ENCODE measurements at regions of chr1 and their contacts with region 1.

Region 1: DNA sequence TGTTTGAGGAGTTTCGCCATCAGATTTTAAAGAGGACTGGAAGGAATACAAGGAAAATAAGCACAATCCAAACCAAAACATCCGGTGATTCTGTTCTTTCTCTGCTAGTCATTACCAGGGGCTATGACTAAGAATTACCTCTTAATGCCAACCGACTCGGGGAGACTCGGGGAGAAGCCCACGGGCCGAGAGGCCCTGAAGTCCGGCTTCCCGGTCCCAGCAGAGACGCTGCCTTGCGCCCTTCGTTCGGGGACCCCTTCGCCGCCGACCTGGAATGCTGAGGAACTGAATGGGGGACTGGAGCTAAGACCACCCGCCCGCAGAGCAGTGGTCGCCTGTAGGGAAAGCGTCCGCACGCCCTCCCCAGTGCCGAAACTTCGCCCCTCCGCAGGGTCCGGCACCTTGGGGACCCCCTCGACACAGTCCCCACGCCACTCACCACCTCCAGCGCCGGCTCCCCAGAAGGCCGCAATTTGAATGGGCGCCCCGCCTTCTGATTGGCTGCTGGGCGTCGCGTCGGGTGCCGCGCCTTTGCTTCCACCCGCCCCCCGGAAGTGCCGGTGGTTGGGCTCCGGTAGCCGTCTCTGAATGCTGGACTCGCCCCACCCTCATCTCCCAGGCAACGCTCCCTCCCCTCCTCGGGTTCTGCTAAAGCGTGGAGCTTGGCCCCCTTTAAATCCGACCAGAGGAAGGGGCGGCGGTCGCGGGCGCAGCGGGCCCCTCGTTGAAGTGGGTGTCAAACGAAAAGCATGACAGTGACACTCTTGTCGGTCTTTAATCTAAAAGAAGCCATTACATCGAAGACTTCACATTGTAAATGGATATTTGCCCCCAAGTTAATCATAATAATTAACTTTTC is at the start of gene KIF14:
- DNase-seq: peak; percentile 96
- H3K4me3 Mint-ChIP-seq: peak within 1 kb of the TSS; percentile 90
- H3K27ac Mint-ChIP-seq: peak within 1 kb of the TSS; percentile 86
- H3K4me1 Mint-ChIP-seq: peaks cover 66% of the 10 kb centered on the region
- H3K27me3 Mint-ChIP-seq: no peaks in the 10 kb centered on the region
- total RNA-seq, gene KIF14: 28.3 to 30.3 TPM

Region 2: GRCh38 chr1:200634261-200635122 is 14.0 kb after region 1 on chr1:
- CTCF ChIA-PET with region 1: interaction called, 26 read pairs
- POLR2A ChIA-PET with region 1: no interaction called
- DNase-seq: no peak
- H3K4me3 Mint-ChIP-seq: no peak overlapping the region
- H3K27ac Mint-ChIP-seq: no peak overlapping the region
- H3K4me1 Mint-ChIP-seq: peaks cover 4% of the 10 kb centered on the region
- H3K27me3 Mint-ChIP-seq: peaks cover 3% of the 10 kb centered on the region

Region 3: DNA sequence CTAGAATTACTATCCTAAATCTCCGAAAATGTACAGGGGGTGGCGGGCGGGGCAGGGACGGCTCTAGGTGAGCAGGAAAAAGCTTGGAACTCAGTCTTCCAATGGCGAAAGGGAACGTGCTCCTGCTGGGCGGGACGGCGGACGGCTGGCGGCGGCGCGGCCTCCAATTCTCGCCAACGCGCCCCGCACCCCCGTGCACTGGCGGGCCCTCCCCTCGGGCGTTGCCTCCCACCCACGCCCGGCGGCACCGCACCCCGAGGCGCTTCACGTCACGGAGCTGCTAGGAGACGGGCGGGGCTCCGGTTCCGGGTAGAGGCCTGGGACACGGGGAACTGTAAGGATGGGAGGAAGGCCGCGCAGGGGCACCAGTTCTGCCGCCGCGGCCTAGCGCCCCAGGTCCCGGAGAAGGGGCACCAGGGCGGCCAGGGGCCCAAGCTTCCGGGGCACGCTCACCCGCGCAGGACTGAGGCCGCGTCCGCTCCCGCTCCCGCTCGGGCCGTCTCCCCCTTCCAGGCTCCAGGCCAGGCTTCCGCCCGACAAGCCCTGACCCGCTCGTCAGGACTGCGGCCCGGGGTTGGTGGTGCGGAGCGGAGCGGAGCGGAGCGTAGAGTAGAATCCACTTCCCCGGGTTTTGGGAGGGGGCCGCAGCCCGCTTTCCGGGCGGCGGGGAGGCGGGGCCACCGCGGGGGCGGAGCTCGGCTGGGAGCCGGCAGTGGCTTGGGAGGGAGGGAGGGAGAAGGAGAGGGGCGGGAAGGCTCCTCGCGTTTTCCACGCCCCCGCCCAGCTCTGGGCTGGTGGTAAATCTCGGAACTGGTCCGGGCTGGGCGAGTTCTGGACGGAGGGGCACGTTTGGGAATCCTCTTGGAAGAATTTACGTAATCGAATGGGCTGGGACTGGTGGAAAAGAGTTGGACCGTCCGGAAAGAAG is 49.1 kb after region 1 on chr1 and contains the start of gene DDX59:
- CTCF ChIA-PET with region 1: interaction called, 62 read pairs
- POLR2A ChIA-PET with region 1: interaction called, 62 read pairs
- DNase-seq: peak; percentile 91
- H3K4me3 Mint-ChIP-seq: peak within 1 kb of the TSS; percentile 99
- H3K27ac Mint-ChIP-seq: peak within 1 kb of the TSS; percentile 93
- H3K4me1 Mint-ChIP-seq: peaks cover 35% of the 10 kb centered on the region
- H3K27me3 Mint-ChIP-seq: no peaks in the 10 kb centered on the region
- total RNA-seq, gene DDX59: 32.1 to 34.0 TPM

Region 4: GRCh38 chr1:200738327-200738739 is 117.8 kb after region 1 on chr1:
- CTCF ChIA-PET with region 1: interaction called, 12 read pairs
- POLR2A ChIA-PET with region 1: interaction called, 4 read pairs
- DNase-seq: no peak
- H3K4me3 Mint-ChIP-seq: peak overlapping the region; percentile 90
- H3K27ac Mint-ChIP-seq: peak overlapping the region; percentile 28
- H3K4me1 Mint-ChIP-seq: peaks cover 21% of the 10 kb centered on the region
- H3K27me3 Mint-ChIP-seq: peaks cover 36% of the 10 kb centered on the region

Region 5: GRCh38 chr1:200794506-200795065 is 174.1 kb after region 1 on chr1:
- CTCF ChIA-PET with region 1: interaction called, 109 read pairs
- POLR2A ChIA-PET with region 1: no interaction called
- DNase-seq: no peak
- H3K4me3 Mint-ChIP-seq: no peak overlapping the region
- H3K27ac Mint-ChIP-seq: no peak overlapping the region
- H3K4me1 Mint-ChIP-seq: no peaks in the 10 kb centered on the region
- H3K27me3 Mint-ChIP-seq: peaks cover 5% of the 10 kb centered on the region

Region 6: DNA sequence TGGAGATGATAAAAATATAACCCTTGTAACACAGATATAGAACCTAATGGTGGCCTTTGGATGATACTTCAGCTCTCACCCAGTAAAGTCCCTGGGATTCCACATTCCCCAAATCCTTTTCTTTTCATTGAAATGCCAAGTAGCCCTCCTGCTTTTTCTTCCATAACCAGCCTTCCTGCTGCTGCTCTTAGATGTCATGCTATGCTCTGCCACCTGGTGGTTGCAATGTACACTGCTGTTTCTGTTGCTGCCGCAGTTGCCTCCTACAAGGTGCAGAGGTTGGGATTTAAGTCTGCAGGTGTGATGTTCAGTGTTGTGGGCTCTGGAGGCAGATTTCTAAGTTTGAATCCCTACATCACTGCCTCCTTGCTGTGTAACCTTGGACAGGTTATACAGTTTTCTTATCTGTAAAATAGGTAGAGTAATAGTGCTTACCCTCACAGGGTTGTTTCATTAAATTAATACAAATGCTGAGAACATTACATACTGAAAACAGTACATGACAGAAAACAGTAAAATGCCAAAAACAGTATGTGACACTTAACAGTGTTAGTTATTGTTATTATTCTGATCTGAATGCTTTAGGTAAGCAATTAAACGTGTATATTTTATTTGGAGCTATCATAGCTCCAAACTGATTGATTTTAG is 182.5 kb after region 1 on chr1:
- CTCF ChIA-PET with region 1: interaction called, 109 read pairs
- POLR2A ChIA-PET with region 1: interaction called, 3 read pairs
- DNase-seq: peak; percentile 75
- H3K4me3 Mint-ChIP-seq: no peak overlapping the region
- H3K27ac Mint-ChIP-seq: no peak overlapping the region
- H3K4me1 Mint-ChIP-seq: no peaks in the 10 kb centered on the region
- H3K27me3 Mint-ChIP-seq: peaks cover 21% of the 10 kb centered on the region

Region 7: GRCh38 chr1:200808846-200809245 is 188.3 kb after region 1 on chr1:
- CTCF ChIA-PET with region 1: interaction called, 109 read pairs
- POLR2A ChIA-PET with region 1: no interaction called
- DNase-seq: no peak
- H3K4me3 Mint-ChIP-seq: no peak overlapping the region
- H3K27ac Mint-ChIP-seq: no peak overlapping the region
- H3K4me1 Mint-ChIP-seq: no peaks in the 10 kb centered on the region
- H3K27me3 Mint-ChIP-seq: peaks cover 13% of the 10 kb centered on the region

Measured in activated CD4-positive, alpha-beta memory T cell treated with anti-CD3 and anti-CD28 coated beads, Interleukin-2, amount 10 ng/mL, durations not matched to agents 7 days and 5 days (primary cell).